ENCODE measurements at regions of chr10 and their contacts with region 1.

Region 1: GRCh38 chr10:121608469-121609190 is 10.4 kb upstream of the FGFR2 start:
- DNase-seq: peak; percentile 97
- H3K4me3 ChIP-seq: peak overlapping the region; percentile 36 to 62
- H3K27ac ChIP-seq: no peak overlapping the region
- H3K4me1 ChIP-seq: no peaks in the 10 kb centered on the region; a peak in 1 of 4 replicates
- H3K27me3 ChIP-seq: no peaks in the 10 kb centered on the region; the same call in 1 of the 2 replicates
- CTCF ChIP-seq: peak; percentile 96
- EP300 ChIP-seq: no peak
- RAD21 ChIP-seq: peak; percentile 73

Region 2: DNA sequence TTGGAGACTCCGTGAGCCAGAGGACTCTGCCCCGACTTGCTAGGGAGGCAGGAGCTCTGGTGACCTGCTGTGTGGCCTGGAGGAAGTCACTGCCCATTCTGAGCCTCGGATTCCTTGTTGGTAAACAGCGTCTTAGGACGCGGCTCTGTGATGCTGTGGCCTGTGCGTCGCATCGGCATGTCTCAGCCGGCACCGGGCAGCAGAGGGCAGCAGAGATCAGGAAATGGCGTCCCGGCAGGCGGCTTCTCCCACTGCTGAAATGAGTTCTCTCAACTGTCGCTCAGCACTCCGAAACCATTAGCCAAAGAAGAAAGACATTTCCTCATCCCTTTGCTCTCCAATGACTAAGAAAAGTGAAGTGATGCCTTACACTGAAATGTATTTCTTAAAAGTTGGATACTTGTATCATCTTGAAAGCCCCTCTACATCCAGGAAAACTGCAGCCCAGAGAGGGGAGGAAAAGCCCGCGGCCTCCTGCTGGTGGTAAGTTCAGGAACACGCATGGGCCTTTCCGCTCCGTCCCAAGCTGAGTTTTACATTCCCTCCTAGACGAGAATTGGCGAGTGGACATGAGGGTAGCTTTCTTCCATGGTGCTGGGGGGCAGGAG is 665.7 kb before region 1 on chr10:
- CTCF ChIA-PET with region 1: interaction called, 38 read pairs
- POLR2A ChIA-PET with region 1: no interaction called
- DNase-seq: peak; percentile 86
- H3K4me3 ChIP-seq: peak overlapping the region in 1 of 2 experiments; percentile 31; a peak in 1 of 4 replicates
- H3K27ac ChIP-seq: no peak overlapping the region
- H3K4me1 ChIP-seq: peaks cover 0 to 3% of the 10 kb centered on the region in 2 experiments; a peak in 1 of 4 replicates
- H3K27me3 ChIP-seq: no peaks in the 10 kb centered on the region
- CTCF ChIP-seq: peak; percentile 87
- EP300 ChIP-seq: no peak
- RAD21 ChIP-seq: peak; percentile 95

Region 3: GRCh38 chr10:121310151-121310711 is 298.4 kb before region 1 on chr10:
- CTCF ChIA-PET with region 1: no interaction called
- POLR2A ChIA-PET with region 1: no interaction called
- DNase-seq: peak; percentile 14
- H3K4me3 ChIP-seq: no peak overlapping the region
- H3K27ac ChIP-seq: no peak overlapping the region
- H3K4me1 ChIP-seq: peaks cover 0 to 20% of the 10 kb centered on the region in 2 experiments; a peak in 2 of 4 replicates
- H3K27me3 ChIP-seq: no peaks in the 10 kb centered on the region
- CTCF ChIP-seq: no peak
- EP300 ChIP-seq: no peak
- RAD21 ChIP-seq: no peak

Region 4: DNA sequence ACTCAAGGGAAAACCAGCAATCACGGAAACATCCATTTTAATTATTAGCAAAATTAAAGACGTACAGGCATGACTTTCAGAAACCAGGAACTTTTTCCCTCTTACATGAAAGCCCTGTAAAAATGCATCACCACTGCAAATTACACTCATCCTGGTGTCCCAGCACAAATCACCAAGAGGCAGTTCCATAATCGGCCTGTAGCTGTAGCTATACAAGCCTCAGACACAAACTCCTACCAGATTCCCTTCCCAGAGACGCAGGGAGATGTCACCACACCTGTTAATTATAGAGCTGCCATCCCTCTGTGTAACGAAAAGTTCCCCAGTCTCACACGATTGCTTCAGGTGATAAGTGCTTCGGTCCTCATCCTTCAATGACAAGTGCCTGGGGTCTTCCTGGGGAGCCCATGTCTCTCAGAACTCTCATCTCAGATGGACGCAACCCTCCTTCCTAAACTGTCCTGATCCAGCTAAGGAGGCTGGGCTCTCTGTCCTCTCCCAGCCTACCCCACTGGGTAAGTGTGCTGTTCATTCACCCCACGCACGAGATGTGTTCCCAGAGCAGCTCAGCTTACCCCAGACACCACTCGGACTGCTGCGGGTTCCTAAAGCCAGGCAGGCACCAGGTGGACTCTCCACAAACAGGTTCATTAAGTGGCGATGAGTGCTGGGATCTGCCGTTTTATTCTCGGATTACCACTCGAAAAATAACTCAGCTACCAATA is 16.3 kb before region 1 on chr10:
- CTCF ChIA-PET with region 1: interaction called, 39 read pairs
- POLR2A ChIA-PET with region 1: no interaction called
- DNase-seq: no peak
- H3K4me3 ChIP-seq: no peak overlapping the region
- H3K27ac ChIP-seq: no peak overlapping the region
- H3K4me1 ChIP-seq: peaks cover 0 to 4% of the 10 kb centered on the region in 2 experiments; a peak in 1 of 4 replicates
- H3K27me3 ChIP-seq: peaks cover 12% of the 10 kb centered on the region
- CTCF ChIP-seq: no peak
- EP300 ChIP-seq: no peak
- RAD21 ChIP-seq: no peak

Region 5: DNA sequence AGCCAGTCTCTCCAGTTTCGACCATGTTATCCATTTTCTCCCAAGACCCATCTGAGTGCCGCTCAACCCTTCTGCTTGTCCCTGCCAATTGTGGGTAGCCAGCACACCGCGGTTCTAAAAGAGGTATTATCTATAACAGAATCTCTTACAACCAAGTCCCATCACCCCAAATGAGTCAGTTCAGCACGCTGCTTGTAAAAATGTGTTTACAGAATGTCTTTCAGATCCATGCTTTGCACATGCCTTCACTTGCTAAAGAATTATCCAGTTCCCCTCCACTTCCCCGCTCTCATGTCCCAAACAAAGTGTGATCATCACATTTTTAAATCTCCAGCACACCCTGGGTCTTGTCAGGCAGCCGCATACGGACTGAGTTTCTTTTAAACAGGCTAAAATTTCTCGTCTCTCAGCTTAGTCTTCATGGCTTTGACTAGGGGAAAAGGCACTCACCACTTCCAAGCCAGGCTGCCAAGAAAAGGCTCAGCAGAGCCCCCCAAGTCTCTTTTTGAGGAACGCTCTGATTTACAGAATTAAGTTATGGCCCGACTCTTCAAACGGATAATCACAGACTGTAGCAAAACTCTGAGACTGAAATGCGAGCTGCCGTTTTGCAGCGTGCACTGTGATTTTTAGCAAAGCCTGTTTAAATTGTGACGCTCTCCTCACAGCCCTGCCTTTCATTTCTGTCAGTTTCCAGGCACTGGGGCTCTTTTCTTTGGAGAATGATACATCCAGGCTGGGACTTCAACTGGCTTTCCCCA is 19.4 kb after region 1 on chr10:
- CTCF ChIA-PET with region 1: interaction called, 54 read pairs
- POLR2A ChIA-PET with region 1: no interaction called
- DNase-seq: no peak
- H3K4me3 ChIP-seq: no peak overlapping the region
- H3K27ac ChIP-seq: no peak overlapping the region
- H3K4me1 ChIP-seq: peaks cover 0 to 5% of the 10 kb centered on the region in 2 experiments; a peak in 1 of 4 replicates
- H3K27me3 ChIP-seq: no peaks in the 10 kb centered on the region
- CTCF ChIP-seq: no peak
- EP300 ChIP-seq: no peak
- RAD21 ChIP-seq: no peak

Region 6: DNA sequence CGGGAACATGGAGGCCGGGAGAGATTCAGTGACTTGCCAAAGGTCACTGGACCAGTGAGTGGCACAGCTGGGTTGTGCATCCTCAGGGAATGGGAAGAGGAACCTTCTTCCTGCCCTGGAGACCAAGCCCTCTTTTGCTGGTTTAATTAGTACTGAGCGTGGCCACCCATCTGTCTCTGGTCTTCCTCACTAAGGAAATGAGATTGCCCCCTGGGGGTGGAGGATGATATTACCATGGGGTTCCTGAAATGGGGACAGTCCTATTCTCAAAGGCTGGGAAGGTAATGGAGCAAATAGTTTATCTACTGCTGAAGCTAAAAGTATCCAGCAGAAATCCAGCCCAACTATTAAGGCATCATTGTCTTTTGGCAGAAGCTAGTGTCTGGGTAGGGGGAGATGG is 88.2 kb after region 1 on chr10:
- CTCF ChIA-PET with region 1: interaction called, 23 read pairs
- POLR2A ChIA-PET with region 1: no interaction called
- DNase-seq: peak; percentile 45
- H3K4me3 ChIP-seq: no peak overlapping the region
- H3K27ac ChIP-seq: no peak overlapping the region
- H3K4me1 ChIP-seq: peaks cover 0 to 25% of the 10 kb centered on the region in 2 experiments; a peak in 2 of 4 replicates
- H3K27me3 ChIP-seq: no peaks in the 10 kb centered on the region
- CTCF ChIP-seq: peak; percentile 52
- EP300 ChIP-seq: no peak
- RAD21 ChIP-seq: peak; percentile 29; the same call in 1 of the 2 replicates

Region 7: GRCh38 chr10:121734589-121735045 is 126.0 kb after region 1 on chr10:
- CTCF ChIA-PET with region 1: interaction called, 56 read pairs
- POLR2A ChIA-PET with region 1: no interaction called
- DNase-seq: peak; percentile 70
- H3K4me3 ChIP-seq: no peak overlapping the region
- H3K27ac ChIP-seq: no peak overlapping the region
- H3K4me1 ChIP-seq: peaks cover 0 to 19% of the 10 kb centered on the region in 2 experiments; a peak in 2 of 4 replicates
- H3K27me3 ChIP-seq: no peaks in the 10 kb centered on the region
- CTCF ChIP-seq: peak; percentile 88
- EP300 ChIP-seq: no peak
- RAD21 ChIP-seq: peak; percentile 77

Region 8: GRCh38 chr10:121900443-121901174 is 292.0 kb after region 1 on chr10:
- CTCF ChIA-PET with region 1: interaction called, 14 read pairs
- POLR2A ChIA-PET with region 1: no interaction called
- DNase-seq: peak; percentile 65
- H3K4me3 ChIP-seq: no peak overlapping the region
- H3K27ac ChIP-seq: no peak overlapping the region
- H3K4me1 ChIP-seq: no peaks in the 10 kb centered on the region; a peak in 2 of 4 replicates
- H3K27me3 ChIP-seq: no peaks in the 10 kb centered on the region
- CTCF ChIP-seq: peak; percentile 87
- EP300 ChIP-seq: no peak
- RAD21 ChIP-seq: peak; percentile 84